ENCODE measurements at regions of chr18 and their contacts with region 1.

Region 1: GRCh38 chr18:13216092-13216582 is 2.4 kb upstream of the LDLRAD4 start:
- DNase-seq: peak; percentile 82
- ATAC-seq: peak; percentile 70

Region 2: GRCh38 chr18:13530879-13531387 is 314.8 kb after region 1 on chr18:
- intact Hi-C with region 1: loop called (anchors 5 kb)
- DNase-seq: peak; percentile 78
- ATAC-seq: peak; percentile 92

Measured in left ventricle myocardium superior (tissue), 1 donor.